CD4-positive, alpha-beta T cell (primary cell): ENCODE measurements at regions of chr6 and their contacts with region 1.

Region 1: GRCh38 chr6:188821-189655 is 103.2 kb upstream of the DUSP22 start:
- DNase-seq: peak; percentile 58 to 84 (median 72)
- ATAC-seq: peak; percentile 86
- H3K4me3 ChIP-seq: no peak overlapping the region
- H3K4me3 Mint-ChIP-seq: no peak overlapping the region
- H3K27ac ChIP-seq: no peak overlapping the region
- H3K27ac Mint-ChIP-seq: peak overlapping the region; percentile 2
- H3K4me1 ChIP-seq: peaks cover 16% of the 10 kb centered on the region
- H3K4me1 Mint-ChIP-seq: peaks cover 35% of the 10 kb centered on the region
- H3K27me3 ChIP-seq: no peaks in the 10 kb centered on the region
- H3K27me3 Mint-ChIP-seq: no peaks in the 10 kb centered on the region
- CTCF ChIP-seq: peak; percentile 89

Region 2: GRCh38 chr6:152431-152830 is 36.6 kb before region 1 on chr6:
- CTCF ChIA-PET with region 1: no interaction called
- POLR2A ChIA-PET with region 1: no interaction called
- intact Hi-C with region 1: no loop called
- DNase-seq: no peak
- ATAC-seq: no peak
- H3K4me3 ChIP-seq: no peak overlapping the region
- H3K4me3 Mint-ChIP-seq: no peak overlapping the region
- H3K27ac ChIP-seq: no peak overlapping the region
- H3K27ac Mint-ChIP-seq: no peak overlapping the region
- H3K4me1 ChIP-seq: no peaks in the 10 kb centered on the region
- H3K4me1 Mint-ChIP-seq: peaks cover 5% of the 10 kb centered on the region
- H3K27me3 ChIP-seq: peaks cover 2 to 10% of the 10 kb centered on the region in 2 experiments
- H3K27me3 Mint-ChIP-seq: peaks cover 46% of the 10 kb centered on the region
- CTCF ChIP-seq: no peak

Region 3: GRCh38 chr6:235763-236360 is 46.8 kb after region 1 on chr6:
- CTCF ChIA-PET with region 1: interaction called, 5 read pairs
- POLR2A ChIA-PET with region 1: no interaction called
- intact Hi-C with region 1: loop called in 1 of 2 experiments (anchors 5 kb)
- DNase-seq: peak in 4 of 14 experiments; percentile 32 to 88 (median 74)
- ATAC-seq: peak; percentile 85
- H3K4me3 ChIP-seq: peak overlapping the region; percentile 30
- H3K4me3 Mint-ChIP-seq: peak overlapping the region; percentile 65
- H3K27ac ChIP-seq: peak overlapping the region; percentile 30 to 50
- H3K27ac Mint-ChIP-seq: peak overlapping the region; percentile 81
- H3K4me1 ChIP-seq: peaks cover 25% of the 10 kb centered on the region
- H3K4me1 Mint-ChIP-seq: peaks cover 23% of the 10 kb centered on the region
- H3K27me3 ChIP-seq: no peaks in the 10 kb centered on the region
- H3K27me3 Mint-ChIP-seq: no peaks in the 10 kb centered on the region
- CTCF ChIP-seq: no peak

Region 4: DNA sequence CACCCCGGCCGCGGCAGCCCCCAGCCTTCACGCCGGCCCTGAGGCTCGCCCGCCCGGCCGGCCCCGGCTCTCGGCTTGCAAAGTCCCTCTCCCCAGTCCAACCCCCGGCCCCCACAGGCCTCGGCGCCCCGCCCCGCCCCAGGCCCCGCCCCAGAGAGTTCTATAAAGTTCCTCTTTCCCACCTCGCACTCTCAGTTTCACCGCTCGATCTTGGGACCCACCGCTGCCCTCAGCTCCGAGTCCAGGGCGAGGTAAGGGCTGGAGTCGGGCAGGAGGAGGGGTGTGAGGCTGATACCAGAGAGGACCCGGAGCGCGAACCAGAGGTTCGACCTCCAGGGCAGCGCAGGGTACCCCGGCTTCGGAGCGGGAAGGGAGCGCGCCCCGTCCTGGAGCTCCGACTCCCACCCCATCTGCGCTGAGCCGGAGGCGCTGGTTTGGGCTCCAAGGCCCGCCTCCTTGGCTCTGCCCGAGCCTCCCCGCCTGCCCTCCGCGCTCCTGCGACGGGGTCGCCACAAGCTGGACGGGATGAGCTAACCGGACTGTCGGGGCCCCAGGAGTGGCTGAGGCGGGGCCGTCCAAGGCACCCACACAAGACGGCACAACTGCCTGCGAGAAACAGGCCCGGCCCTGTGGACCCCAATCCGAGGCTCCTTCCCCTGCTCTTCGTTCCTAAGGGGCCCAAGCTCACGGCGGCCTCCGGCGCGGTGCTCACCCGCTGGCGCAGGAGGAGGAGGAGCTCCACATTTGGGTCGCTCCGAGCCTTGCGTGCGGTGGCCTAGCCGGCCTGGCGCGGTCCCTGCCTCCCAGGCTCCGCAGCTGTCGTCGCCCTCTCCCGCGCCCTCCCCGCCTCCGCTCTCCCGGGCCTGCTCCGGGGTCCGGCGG is 202.8 kb after region 1 on chr6 and contains the start of gene IRF4:
- CTCF ChIA-PET with region 1: interaction called, 7 read pairs
- POLR2A ChIA-PET with region 1: no interaction called
- intact Hi-C with region 1: loop called in 1 of 2 experiments (anchors 5 kb)
- DNase-seq: peak in 12 of 14 experiments; percentile 33 to 76 (median 44)
- ATAC-seq: peak; percentile 33
- H3K4me3 ChIP-seq: peak within 1 kb of the TSS; percentile 80
- H3K4me3 Mint-ChIP-seq: peak within 1 kb of the TSS; percentile 96
- H3K27ac ChIP-seq: no peak within 1 kb of the TSS
- H3K27ac Mint-ChIP-seq: peak within 1 kb of the TSS; percentile 79
- H3K4me1 ChIP-seq: peaks cover 38% of the 10 kb centered on the region
- H3K4me1 Mint-ChIP-seq: peaks cover 33% of the 10 kb centered on the region
- H3K27me3 ChIP-seq: no peaks in the 10 kb centered on the region
- H3K27me3 Mint-ChIP-seq: peaks cover 9% of the 10 kb centered on the region
- CTCF ChIP-seq: no peak
- total RNA-seq, gene IRF4: 16.9 to 20.8 TPM

Region 5: GRCh38 chr6:524803-525202 is 335.8 kb after region 1 on chr6:
- CTCF ChIA-PET with region 1: no interaction called
- POLR2A ChIA-PET with region 1: no interaction called
- intact Hi-C with region 1: loop called in 1 of 2 experiments (anchors 2 kb)
- DNase-seq: peak in 11 of 14 experiments; percentile 10 to 67 (median 39)
- ATAC-seq: no peak
- H3K4me3 ChIP-seq: no peak overlapping the region
- H3K4me3 Mint-ChIP-seq: no peak overlapping the region
- H3K27ac ChIP-seq: no peak overlapping the region
- H3K27ac Mint-ChIP-seq: no peak overlapping the region
- H3K4me1 ChIP-seq: no peaks in the 10 kb centered on the region
- H3K4me1 Mint-ChIP-seq: peaks cover 6% of the 10 kb centered on the region
- H3K27me3 ChIP-seq: no peaks in the 10 kb centered on the region
- H3K27me3 Mint-ChIP-seq: no peaks in the 10 kb centered on the region
- CTCF ChIP-seq: peak; percentile 19